Esophagus muscularis mucosa (tissue), 4 donors: ENCODE measurements at regions of chr11 and their contacts with region 1.

Region 1: GRCh38 chr11:83827940-83828554 is 541.9 kb upstream of the CCDC90B start:
- DNase-seq: no peak
- H3K4me3 ChIP-seq: peak overlapping the region; percentile 39 to 53 (median 44)
- H3K27ac ChIP-seq: peak overlapping the region in 1 of 4 donors; percentile 17
- H3K4me1 ChIP-seq: peaks cover 0 to 7% (median 6%) of the 10 kb centered on the region in 4 donors
- H3K27me3 ChIP-seq: no peaks in the 10 kb centered on the region
- CTCF ChIP-seq: peak; percentile 51 to 60 (median 52)
- EP300 ChIP-seq: no peak
- POLR2A ChIP-seq: no peak

Region 2: DNA sequence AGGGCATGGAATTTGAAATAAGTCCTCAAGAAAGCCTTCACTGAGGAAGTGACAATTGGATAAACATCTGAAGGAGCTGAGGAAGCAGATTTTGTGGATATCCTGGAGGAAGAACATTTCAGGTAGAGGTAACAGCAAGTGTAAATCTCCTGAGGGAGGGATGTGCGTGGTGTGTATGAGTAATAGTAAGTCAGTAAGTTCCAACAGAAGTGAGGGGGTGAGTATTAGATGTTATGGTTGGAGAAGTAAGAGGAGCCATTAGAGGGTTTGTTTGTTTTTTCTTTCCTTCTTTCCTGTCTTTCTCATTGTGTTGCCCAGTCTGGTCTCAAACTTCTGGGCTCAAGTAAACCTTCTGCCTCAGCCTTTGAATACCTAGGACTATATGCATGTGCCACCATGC is 605.5 kb before region 1 on chr11:
- intact Hi-C with region 1: no loop called
- DNase-seq: no peak
- H3K4me3 ChIP-seq: no peak overlapping the region
- H3K27ac ChIP-seq: no peak overlapping the region
- H3K4me1 ChIP-seq: no peaks in the 10 kb centered on the region
- H3K27me3 ChIP-seq: no peaks in the 10 kb centered on the region
- CTCF ChIP-seq: no peak
- EP300 ChIP-seq: no peak
- POLR2A ChIP-seq: no peak

Region 3: GRCh38 chr11:84564180-84564866 is 736.3 kb after region 1 on chr11:
- intact Hi-C with region 1: loop called (anchors 5 kb)
- DNase-seq: no peak
- H3K4me3 ChIP-seq: peak overlapping the region in 2 of 4 donors; percentile 13 to 19
- H3K27ac ChIP-seq: peak overlapping the region; percentile 14 to 46 (median 45)
- H3K4me1 ChIP-seq: peaks cover 0 to 19% (median 16%) of the 10 kb centered on the region in 4 donors
- H3K27me3 ChIP-seq: no peaks in the 10 kb centered on the region
- CTCF ChIP-seq: peak; percentile 75 to 93 (median 93)
- EP300 ChIP-seq: no peak
- POLR2A ChIP-seq: no peak